ENCODE measurements at regions of chr1 and their contacts with region 1.

Region 1: DNA sequence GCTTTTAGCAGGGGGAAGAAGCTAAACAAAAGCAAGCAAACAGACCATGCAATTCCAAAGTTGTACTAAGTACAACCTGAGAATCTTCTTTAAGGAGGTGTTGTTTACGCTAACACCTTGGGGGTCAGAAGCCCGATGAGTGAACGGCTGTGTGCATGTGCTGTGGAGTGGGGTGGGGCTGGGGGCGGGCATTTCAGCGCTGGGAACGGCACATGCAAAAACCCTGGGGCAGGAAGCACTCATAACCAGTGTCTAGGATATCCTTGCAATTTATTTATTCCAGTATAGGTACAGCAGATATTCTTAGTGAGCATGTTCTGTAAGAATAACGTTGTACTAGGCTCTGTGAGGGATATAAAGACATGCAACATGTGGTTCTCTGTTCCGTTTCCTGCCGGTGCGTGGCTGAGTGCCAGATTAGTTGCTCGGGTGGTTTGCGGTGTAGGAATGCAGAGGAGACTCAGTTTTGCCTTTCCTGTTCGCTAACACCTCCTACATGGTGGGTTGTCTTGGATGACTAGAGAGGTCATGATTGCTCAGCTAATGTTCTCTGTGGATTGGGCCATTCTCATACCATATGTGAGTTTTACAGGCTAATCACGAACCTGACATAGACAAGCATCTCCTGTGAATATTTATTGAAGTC is 3.7 kb downstream of the FASLG start:
- DNase-seq: peak; percentile 96
- ATAC-seq: peak; percentile 75
- H3K4me3 Mint-ChIP-seq: peak overlapping the region; percentile 79
- H3K27ac Mint-ChIP-seq: peak overlapping the region; percentile 85
- H3K4me1 Mint-ChIP-seq: peaks cover 80% of the 10 kb centered on the region
- H3K27me3 Mint-ChIP-seq: peaks cover 8% of the 10 kb centered on the region
- CTCF ChIP-seq: no peak

Region 2: DNA sequence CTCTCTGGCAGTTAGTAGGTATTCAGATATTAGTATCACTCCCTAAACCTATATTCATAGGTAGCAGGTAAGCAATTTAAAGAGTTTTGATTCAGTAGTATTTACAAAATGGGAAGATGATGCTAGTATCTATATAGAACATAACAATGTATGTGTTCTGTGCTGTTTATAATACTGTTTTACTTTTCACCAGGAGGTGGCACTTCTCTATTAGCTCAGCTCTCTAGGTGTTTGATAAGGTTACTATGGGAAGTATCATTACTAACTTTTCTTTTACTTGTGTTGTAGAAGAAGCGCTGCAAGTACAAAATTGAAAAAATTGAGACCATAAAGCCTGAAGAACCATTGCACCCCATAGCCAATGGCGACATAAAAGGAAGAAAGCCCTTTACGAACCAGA is 53.1 kb before region 1 on chr1:
- CTCF ChIA-PET with region 1: interaction called, 11 read pairs
- POLR2A ChIA-PET with region 1: no interaction called
- intact Hi-C with region 1: no loop called
- DNase-seq: no peak
- ATAC-seq: peak; percentile 73
- H3K4me3 Mint-ChIP-seq: no peak overlapping the region
- H3K27ac Mint-ChIP-seq: no peak overlapping the region
- H3K4me1 Mint-ChIP-seq: peaks cover under 1% of the 10 kb centered on the region
- H3K27me3 Mint-ChIP-seq: no peaks in the 10 kb centered on the region
- CTCF ChIP-seq: peak; percentile 51

Region 3: GRCh38 chr1:172630056-172630818 is 32.4 kb before region 1 on chr1:
- CTCF ChIA-PET with region 1: interaction called, 5 read pairs
- POLR2A ChIA-PET with region 1: interaction called, 3 read pairs
- intact Hi-C with region 1: loop called (anchors 5 kb)
- DNase-seq: no peak
- ATAC-seq: no peak
- H3K4me3 Mint-ChIP-seq: no peak overlapping the region
- H3K27ac Mint-ChIP-seq: no peak overlapping the region
- H3K4me1 Mint-ChIP-seq: peaks cover 47% of the 10 kb centered on the region
- H3K27me3 Mint-ChIP-seq: peaks cover 5% of the 10 kb centered on the region
- CTCF ChIP-seq: no peak

Region 4: DNA sequence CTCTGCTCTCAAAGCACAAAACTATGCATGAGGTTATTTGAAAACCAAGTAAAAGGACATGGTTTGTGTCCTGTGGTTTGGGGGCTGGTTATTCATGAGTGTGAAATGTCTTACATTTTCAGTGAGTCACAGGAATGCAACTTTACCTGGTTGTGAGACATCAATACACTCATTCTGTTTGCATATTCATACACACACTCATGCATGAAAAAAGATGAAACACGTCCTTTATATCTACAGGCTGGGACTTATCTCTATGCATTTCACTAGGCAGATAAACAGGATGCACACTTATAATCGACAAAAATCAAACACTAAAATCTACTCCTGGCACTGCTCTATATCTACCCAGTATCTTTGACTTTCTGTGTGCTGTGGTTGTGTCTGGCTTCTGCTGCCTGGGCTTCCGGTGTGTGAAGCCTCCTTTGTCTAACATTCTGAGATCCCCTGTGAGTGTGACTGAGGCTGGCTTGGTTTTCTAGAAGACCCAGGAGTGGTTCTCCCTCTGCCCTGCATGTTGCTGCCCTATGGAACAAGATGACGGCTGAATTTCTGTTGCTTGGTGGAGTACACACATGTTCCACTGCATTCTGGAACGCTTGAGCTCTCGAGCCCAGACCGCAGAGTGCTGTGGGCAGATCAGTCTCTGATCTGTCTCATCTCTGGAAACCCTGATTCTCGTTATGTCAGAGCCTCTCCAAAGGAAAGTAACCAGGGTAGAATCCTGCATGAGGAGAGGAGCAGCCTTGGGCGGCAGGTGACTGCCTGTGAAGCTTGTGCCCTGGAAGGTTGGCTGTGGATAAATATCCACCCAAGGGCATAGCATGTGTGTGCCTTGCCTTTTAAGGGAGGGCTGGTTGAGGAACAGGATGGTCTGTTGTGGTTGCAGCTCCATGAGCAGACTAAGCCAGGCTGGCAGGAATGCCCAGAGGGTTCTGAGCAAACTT is 23.4 kb before region 1 on chr1:
- CTCF ChIA-PET with region 1: interaction called, 17 read pairs
- POLR2A ChIA-PET with region 1: interaction called, 17 read pairs
- intact Hi-C with region 1: loop called (anchors 1 kb)
- DNase-seq: peak; percentile 94
- ATAC-seq: peak; percentile 75
- H3K4me3 Mint-ChIP-seq: peak overlapping the region; percentile 49
- H3K27ac Mint-ChIP-seq: peak overlapping the region; percentile 98
- H3K4me1 Mint-ChIP-seq: peaks cover 72% of the 10 kb centered on the region
- H3K27me3 Mint-ChIP-seq: no peaks in the 10 kb centered on the region
- CTCF ChIP-seq: no peak

Region 5: DNA sequence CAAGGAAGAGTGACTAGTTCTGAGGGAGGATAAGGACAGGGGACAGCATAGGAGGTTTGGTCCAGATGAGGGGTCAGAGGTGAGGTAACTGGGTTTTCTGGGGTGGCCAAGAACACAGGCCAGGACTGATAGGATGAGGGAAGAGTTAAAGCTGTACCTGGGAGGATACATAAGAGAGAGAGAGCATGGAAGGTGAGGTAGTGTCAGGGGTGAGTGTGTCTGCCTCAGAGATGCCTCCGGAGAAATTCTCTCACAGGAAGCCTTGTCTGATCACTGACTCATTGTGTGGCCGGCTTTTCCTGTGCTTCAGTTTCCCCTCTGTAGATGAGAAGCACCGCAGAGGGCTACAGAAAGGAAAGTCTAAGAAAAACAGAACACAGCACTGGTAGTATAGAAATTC is 36.5 kb after region 1 on chr1:
- CTCF ChIA-PET with region 1: interaction called, 4 read pairs
- POLR2A ChIA-PET with region 1: interaction called, 4 read pairs
- intact Hi-C with region 1: loop called (anchors 2 kb)
- DNase-seq: peak; percentile 87
- ATAC-seq: peak; percentile 80
- H3K4me3 Mint-ChIP-seq: peak overlapping the region; percentile 50
- H3K27ac Mint-ChIP-seq: peak overlapping the region; percentile 95
- H3K4me1 Mint-ChIP-seq: peaks cover 54% of the 10 kb centered on the region
- H3K27me3 Mint-ChIP-seq: no peaks in the 10 kb centered on the region
- CTCF ChIP-seq: no peak

Region 6: GRCh38 chr1:172708452-172708851 is 45.9 kb after region 1 on chr1:
- CTCF ChIA-PET with region 1: interaction called, 5 read pairs
- POLR2A ChIA-PET with region 1: interaction called, 4 read pairs
- intact Hi-C with region 1: loop called (anchors 2 kb)
- DNase-seq: peak; percentile 58
- ATAC-seq: peak; percentile 86
- H3K4me3 Mint-ChIP-seq: peak overlapping the region; percentile 13
- H3K27ac Mint-ChIP-seq: peak overlapping the region; percentile 47
- H3K4me1 Mint-ChIP-seq: peaks cover 17% of the 10 kb centered on the region
- H3K27me3 Mint-ChIP-seq: no peaks in the 10 kb centered on the region
- CTCF ChIP-seq: no peak